Transverse colon (tissue), 4 donors: ENCODE measurements at regions of chr17 and their contacts with region 1.

Region 1: DNA sequence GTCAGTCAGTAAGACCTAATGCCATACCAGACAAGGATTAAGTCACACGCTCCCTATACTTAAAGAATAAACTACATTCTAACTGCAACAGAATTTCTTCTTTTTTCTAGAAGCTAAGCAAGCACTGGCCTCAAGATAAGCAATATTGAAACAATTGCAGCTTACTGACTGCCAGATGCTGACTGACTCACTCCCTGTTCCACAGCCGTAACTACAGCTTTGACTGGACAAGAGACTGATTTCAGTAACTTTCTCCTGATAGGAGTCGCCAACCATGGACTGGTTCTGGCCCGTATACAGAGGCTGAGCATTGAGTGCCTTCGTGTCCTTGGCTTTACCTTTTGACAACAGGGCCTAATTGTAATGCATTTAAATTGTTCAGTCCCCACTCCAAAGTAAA is 67.9 kb downstream of the TRIM37 start:
- DNase-seq: no peak
- H3K4me3 ChIP-seq: no peak overlapping the region
- H3K27ac ChIP-seq: no peak overlapping the region
- H3K4me1 ChIP-seq: no peaks in the 10 kb centered on the region
- H3K27me3 ChIP-seq: no peaks in the 10 kb centered on the region
- CTCF ChIP-seq: no peak
- EP300 ChIP-seq: no peak
- POLR2A ChIP-seq: no peak

Region 2: DNA sequence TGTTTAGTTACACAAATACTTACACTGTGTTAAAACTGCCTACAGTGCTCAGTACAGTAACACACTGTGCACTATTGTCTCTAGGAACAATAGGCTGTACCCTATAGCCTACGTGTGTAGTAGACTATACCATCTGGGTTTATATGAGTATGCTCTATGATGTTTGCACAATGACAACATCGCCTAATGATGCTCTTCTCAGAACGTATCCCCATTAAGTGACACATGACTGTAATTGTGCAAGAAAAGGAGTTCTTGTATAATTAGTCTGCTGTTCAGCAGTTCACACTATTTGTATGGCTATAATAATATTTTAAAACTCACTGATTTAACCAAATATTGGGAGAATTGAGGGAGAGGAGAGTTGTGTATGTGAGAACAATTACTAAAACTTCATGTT is 105.8 kb before region 1 on chr17:
- in situ Hi-C with region 1: loop called in 1 of 4 experiments (anchors 25 kb)
- intact Hi-C with region 1: no loop called
- DNase-seq: no peak
- H3K4me3 ChIP-seq: no peak overlapping the region
- H3K27ac ChIP-seq: no peak overlapping the region
- H3K4me1 ChIP-seq: no peaks in the 10 kb centered on the region
- H3K27me3 ChIP-seq: no peaks in the 10 kb centered on the region
- CTCF ChIP-seq: no peak
- EP300 ChIP-seq: no peak
- POLR2A ChIP-seq: no peak

Region 3: GRCh38 chr17:59506894-59507726 is 468.4 kb after region 1 on chr17:
- in situ Hi-C with region 1: no loop called
- intact Hi-C with region 1: no loop called
- DNase-seq: no peak
- H3K4me3 ChIP-seq: no peak overlapping the region
- H3K27ac ChIP-seq: no peak overlapping the region
- H3K4me1 ChIP-seq: no peaks in the 10 kb centered on the region
- H3K27me3 ChIP-seq: no peaks in the 10 kb centered on the region
- CTCF ChIP-seq: no peak
- EP300 ChIP-seq: no peak
- POLR2A ChIP-seq: no peak